ENCODE measurements at regions of chr14 and their contacts with region 1.

Region 1: DNA sequence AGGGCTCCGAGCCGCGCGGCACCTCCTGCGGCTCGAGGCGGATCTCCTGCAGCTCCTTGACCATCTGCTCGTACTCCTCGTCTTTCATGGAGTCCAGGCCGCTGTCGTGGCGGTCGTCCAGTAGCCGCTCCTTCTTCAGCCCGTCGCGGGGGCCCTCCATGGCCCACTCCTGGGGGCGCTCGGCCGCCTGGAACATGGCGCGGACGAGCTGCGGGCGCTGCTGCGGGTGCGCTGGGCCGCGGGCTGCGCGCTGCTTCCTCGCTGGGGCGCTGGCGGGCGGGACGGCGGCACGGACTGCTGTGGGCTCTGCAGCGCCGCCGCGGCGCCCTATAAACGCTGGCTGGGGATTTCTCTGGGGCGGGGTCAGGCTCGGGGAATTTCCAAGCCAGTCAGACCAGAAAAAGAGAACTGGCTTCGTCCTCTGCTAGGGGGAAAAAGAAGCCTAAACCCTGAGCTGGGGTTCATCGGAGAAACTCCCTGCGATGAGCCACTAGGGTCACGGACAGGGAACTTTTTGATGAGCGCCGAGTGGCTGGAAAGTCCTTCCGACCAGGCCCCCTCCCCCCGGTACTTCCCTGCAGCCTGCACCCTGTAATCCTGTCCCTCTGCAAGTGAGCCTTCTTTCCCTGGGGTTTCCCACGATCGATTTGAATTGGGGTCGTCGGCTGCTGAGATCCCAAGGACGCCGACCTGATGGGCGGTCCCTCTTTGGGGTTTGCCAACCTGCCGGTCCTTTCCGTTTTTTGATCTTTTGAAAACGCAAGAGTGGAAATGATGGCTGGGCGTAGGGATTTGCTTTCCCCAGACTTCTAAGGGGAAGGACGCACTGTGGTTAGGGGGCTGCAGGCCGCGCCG is at the start of gene NFKBIA:
- DNase-seq: peak; percentile 90
- ATAC-seq: peak; percentile 72
- H3K4me3 Mint-ChIP-seq: peak within 1 kb of the TSS; percentile 93
- H3K27ac Mint-ChIP-seq: peak within 1 kb of the TSS; percentile 97
- H3K4me1 Mint-ChIP-seq: peaks cover 52% of the 10 kb centered on the region
- H3K27me3 Mint-ChIP-seq: no peaks in the 10 kb centered on the region
- total RNA-seq, gene NFKBIA: 56.1 to 56.8 TPM

Region 2: GRCh38 chr14:35121887-35122695 is 282.6 kb before region 1 on chr14 and contains the starts of genes PPP2R3C and PRORP:
- CTCF ChIA-PET with region 1: interaction called, 15 read pairs
- POLR2A ChIA-PET with region 1: interaction called, 34 read pairs
- DNase-seq: peak; percentile 96
- ATAC-seq: peak; percentile 90
- H3K4me3 Mint-ChIP-seq: peak within 1 kb of the TSS; percentile 98
- H3K27ac Mint-ChIP-seq: peak within 1 kb of the TSS; percentile 99
- H3K4me1 Mint-ChIP-seq: peaks cover 55% of the 10 kb centered on the region
- H3K27me3 Mint-ChIP-seq: no peaks in the 10 kb centered on the region
- total RNA-seq, gene PPP2R3C: 33.3 to 38.6 TPM
- total RNA-seq, gene PRORP: 32.5 to 35.4 TPM

Region 3: DNA sequence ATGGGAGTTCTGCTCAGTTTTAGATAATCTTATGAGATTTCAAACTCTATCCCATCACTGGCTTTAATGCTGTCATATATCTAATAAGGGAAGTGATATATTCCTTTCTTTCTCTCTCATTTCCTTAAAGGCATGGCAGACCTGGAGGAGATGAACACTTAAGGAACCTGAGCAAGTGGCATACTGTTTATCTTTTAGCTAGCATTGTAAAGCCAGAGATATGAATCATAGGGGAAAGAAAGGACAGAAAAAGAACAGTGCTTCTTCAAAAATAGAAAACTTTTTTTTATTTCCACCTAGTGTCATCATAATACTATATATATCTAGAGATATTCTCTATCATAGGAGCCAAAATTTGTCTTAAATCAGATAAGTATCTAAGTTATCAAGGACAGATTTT is 180.7 kb before region 1 on chr14:
- CTCF ChIA-PET with region 1: interaction called, 132 read pairs
- POLR2A ChIA-PET with region 1: interaction called, 37 read pairs
- DNase-seq: no peak
- ATAC-seq: no peak
- H3K4me3 Mint-ChIP-seq: no peak overlapping the region
- H3K27ac Mint-ChIP-seq: no peak overlapping the region
- H3K4me1 Mint-ChIP-seq: peaks cover 11% of the 10 kb centered on the region
- H3K27me3 Mint-ChIP-seq: no peaks in the 10 kb centered on the region

Region 4: GRCh38 chr14:35285168-35286002 is 119.3 kb before region 1 on chr14:
- CTCF ChIA-PET with region 1: interaction called, 15 read pairs
- POLR2A ChIA-PET with region 1: interaction called, 102 read pairs
- DNase-seq: peak; percentile 42
- ATAC-seq: peak; percentile 80
- H3K4me3 Mint-ChIP-seq: peak overlapping the region; percentile 68
- H3K27ac Mint-ChIP-seq: peak overlapping the region; percentile 85
- H3K4me1 Mint-ChIP-seq: peaks cover 48% of the 10 kb centered on the region
- H3K27me3 Mint-ChIP-seq: no peaks in the 10 kb centered on the region

Region 5: DNA sequence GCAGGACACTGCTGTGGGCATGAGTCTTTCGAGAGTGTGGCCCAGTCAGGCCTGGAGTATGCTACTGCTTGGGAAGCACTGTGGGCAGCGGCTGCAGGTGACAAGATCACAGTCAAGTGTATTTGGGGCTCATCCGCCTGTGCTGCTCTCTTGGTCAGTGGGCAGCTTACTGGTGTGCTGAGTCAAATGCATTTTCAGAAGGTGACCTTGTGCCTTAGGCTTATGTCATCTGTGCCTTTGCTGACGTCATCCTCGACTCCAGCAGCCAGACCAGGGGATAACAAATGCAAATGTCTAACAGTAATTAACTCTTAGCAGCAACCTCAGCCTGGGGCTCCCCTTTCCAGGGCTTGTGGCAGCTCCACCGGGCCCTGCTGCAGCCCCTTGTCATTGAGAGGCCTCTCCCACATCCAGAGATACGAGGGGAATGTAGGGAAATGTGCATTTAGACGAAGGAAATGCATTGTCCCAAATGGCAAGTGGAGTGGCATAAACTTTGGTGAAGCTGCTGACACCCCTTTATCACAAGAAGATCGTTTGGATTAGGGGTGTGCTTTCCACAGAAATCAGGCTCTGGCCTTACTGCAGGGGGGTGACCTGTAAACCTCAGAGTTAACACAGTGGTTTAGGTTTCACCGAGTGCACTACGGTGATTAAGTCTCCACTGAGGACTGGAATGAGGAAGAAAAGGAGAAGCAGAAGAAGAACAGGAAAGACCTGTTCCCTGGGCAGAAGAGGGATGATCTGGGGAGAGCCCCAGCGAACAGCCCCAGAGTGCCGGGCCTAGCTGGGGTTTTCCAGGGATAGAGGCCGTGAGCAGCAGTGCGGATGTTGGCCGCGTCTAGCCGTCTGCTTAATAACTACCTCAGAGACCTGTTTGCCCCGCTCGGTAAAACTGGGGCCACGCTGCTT is 72.8 kb before region 1 on chr14:
- CTCF ChIA-PET with region 1: interaction called, 27 read pairs
- POLR2A ChIA-PET with region 1: interaction called, 70 read pairs
- DNase-seq: no peak
- ATAC-seq: no peak
- H3K4me3 Mint-ChIP-seq: no peak overlapping the region
- H3K27ac Mint-ChIP-seq: peak overlapping the region; percentile 89
- H3K4me1 Mint-ChIP-seq: peaks cover 35% of the 10 kb centered on the region
- H3K27me3 Mint-ChIP-seq: no peaks in the 10 kb centered on the region

Region 6: GRCh38 chr14:35374273-35374681 is 30.4 kb before region 1 on chr14:
- CTCF ChIA-PET with region 1: interaction called, 30 read pairs
- POLR2A ChIA-PET with region 1: interaction called, 107 read pairs
- DNase-seq: no peak
- ATAC-seq: no peak
- H3K4me3 Mint-ChIP-seq: no peak overlapping the region
- H3K27ac Mint-ChIP-seq: no peak overlapping the region
- H3K4me1 Mint-ChIP-seq: peaks cover 9% of the 10 kb centered on the region
- H3K27me3 Mint-ChIP-seq: no peaks in the 10 kb centered on the region

Region 7: DNA sequence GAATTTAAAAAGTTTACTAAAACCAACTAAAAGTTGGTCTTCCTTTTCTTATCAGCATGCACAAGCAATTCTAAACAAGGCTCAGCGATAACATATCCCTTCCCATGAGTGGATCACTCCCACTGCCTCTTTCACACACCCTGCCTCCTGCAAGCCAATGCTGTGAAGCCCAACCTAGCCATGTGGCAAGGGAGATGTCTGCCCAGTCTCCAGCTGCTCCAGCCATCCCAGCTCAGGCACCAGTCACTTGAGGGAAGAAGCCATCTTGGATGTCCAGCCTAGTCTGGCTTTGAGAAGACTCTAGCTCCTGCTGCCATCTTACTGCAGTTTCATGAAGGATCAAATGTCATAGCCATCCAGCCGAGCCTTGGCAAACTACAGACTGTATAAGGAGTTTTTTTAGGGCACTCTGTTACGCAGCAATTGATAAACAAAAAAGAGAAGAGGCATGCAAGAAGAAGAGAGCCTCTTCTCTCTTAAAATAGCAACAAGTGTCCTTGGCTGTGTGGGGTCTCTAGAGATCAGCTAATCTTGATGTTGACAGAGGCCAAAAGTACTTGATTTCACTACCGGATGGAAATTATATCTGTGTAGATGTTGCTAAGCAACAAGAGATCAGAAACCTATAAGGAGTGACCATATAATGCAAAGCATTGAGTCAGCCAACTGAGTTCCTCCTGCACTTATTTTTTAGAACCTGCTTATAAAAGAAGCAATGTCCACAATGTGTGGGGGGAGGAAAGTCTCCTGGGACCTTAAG is 662.9 kb after region 1 on chr14:
- CTCF ChIA-PET with region 1: no interaction called
- POLR2A ChIA-PET with region 1: no interaction called
- DNase-seq: no peak
- ATAC-seq: no peak
- H3K4me3 Mint-ChIP-seq: no peak overlapping the region
- H3K27ac Mint-ChIP-seq: no peak overlapping the region
- H3K4me1 Mint-ChIP-seq: peaks cover 5% of the 10 kb centered on the region
- H3K27me3 Mint-ChIP-seq: peaks cover 23% of the 10 kb centered on the region

Measured in activated CD8-positive, alpha-beta T cell treated with anti-CD3 and anti-CD28 coated beads, Interleukin-2, amount 10 ng/mL, durations not matched to agents 7 days and 5 days (primary cell).